Endothelial cell of umbilical vein (primary cell): ENCODE measurements at regions of chr6 and their contacts with region 1.

Region 1: GRCh38 chr6:100269189-100269588 is 195.5 kb downstream of the SIM1 start:
- DNase-seq: peak; percentile 81
- H3K4me3 ChIP-seq: no peak overlapping the region
- H3K27ac ChIP-seq: peak overlapping the region; percentile 64
- H3K4me1 ChIP-seq: peaks cover 31% of the 10 kb centered on the region
- H3K27me3 ChIP-seq: no peaks in the 10 kb centered on the region
- CTCF ChIP-seq: no peak
- POLR2A ChIP-seq: peak; percentile 17

Region 2: DNA sequence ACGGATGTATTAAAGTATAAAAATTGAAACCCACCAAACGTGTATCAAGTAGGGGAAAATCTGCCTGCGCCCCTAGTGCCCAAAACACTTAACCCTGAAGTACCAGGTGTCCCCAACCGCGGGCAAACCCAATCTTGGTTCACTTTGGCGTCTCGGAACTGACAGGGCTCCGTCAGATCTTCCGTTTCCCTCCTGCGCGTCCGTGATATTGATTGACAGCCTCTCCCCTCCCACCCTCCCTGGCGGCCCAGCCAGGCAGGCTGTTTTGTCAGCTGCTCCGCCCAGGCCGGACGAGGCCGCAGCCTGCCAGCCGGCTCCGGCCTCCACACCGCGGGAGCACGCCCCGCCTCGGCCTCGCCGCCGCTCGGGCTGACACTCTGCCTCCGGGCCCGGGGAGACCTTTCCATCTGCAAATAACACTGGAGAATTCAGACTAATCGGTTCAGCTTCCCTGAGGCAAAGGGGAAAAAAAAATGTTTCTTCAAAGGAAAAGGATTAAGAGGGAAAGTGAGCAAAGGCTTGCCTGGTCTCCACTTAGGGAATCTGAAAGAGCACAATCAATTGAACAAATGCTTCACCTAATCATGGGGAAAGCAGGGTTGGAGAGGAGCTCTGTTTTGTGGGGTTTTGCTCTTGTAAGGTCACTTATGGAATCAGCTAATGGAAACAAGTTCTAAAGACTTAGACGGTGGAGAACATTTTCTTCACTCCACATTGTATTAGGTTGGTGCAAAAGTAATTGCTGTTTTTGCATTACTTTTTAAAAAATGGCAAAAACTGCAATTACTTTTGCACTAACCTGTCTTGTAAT is 40.2 kb before region 1 on chr6:
- CTCF ChIA-PET with region 1: interaction called, 4 read pairs
- POLR2A ChIA-PET with region 1: no interaction called
- dilution Hi-C with region 1: no loop called
- intact Hi-C with region 1: loop called (anchors 1 kb)
- DNase-seq: peak; percentile 86
- H3K4me3 ChIP-seq: peak overlapping the region; percentile 10 to 65 (median 28)
- H3K27ac ChIP-seq: peak overlapping the region; percentile 81
- H3K4me1 ChIP-seq: peaks cover 35% of the 10 kb centered on the region
- H3K27me3 ChIP-seq: no peaks in the 10 kb centered on the region
- CTCF ChIP-seq: no peak
- POLR2A ChIP-seq: peak; percentile 70

Region 3: DNA sequence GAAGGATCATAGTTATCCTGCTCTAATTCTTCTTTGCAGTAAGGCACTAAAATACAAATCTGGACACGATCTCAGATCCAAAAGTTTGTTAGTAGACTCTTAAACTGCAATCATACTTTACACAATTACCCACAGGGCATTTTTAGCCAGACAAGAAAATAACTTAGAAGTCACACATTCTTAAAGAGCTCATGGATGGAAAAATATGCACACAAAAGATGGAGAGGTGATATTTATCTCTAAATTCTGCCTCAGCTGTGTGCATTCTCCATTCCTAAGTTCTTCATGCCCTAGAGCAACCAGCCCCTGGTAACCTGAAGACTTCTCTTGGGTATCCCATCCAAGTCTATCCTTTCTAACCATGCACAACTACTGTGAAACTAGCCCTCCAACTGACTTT is 440.9 kb after region 1 on chr6:
- CTCF ChIA-PET with region 1: no interaction called
- POLR2A ChIA-PET with region 1: no interaction called
- dilution Hi-C with region 1: no loop called
- intact Hi-C with region 1: no loop called
- DNase-seq: no peak
- H3K4me3 ChIP-seq: no peak overlapping the region
- H3K27ac ChIP-seq: no peak overlapping the region
- H3K4me1 ChIP-seq: no peaks in the 10 kb centered on the region
- H3K27me3 ChIP-seq: no peaks in the 10 kb centered on the region
- CTCF ChIP-seq: no peak
- POLR2A ChIP-seq: no peak